ENCODE measurements at regions of chr3 and their contacts with region 1.

Region 1: GRCh38 chr3:52056968-52057805 is 816 bp upstream of the DUSP7 start:
- DNase-seq: peak; percentile 99
- H3K4me3 ChIP-seq: peak overlapping the region; percentile 47 to 55
- H3K27ac ChIP-seq: peak overlapping the region; percentile 85 to 88
- H3K4me1 ChIP-seq: peaks cover 7% of the 10 kb centered on the region
- H3K27me3 ChIP-seq: no peaks in the 10 kb centered on the region
- CTCF ChIP-seq: peak in 1 of 4 experiments; percentile 40
- POLR2A ChIP-seq: peak; percentile 88

Region 2: DNA sequence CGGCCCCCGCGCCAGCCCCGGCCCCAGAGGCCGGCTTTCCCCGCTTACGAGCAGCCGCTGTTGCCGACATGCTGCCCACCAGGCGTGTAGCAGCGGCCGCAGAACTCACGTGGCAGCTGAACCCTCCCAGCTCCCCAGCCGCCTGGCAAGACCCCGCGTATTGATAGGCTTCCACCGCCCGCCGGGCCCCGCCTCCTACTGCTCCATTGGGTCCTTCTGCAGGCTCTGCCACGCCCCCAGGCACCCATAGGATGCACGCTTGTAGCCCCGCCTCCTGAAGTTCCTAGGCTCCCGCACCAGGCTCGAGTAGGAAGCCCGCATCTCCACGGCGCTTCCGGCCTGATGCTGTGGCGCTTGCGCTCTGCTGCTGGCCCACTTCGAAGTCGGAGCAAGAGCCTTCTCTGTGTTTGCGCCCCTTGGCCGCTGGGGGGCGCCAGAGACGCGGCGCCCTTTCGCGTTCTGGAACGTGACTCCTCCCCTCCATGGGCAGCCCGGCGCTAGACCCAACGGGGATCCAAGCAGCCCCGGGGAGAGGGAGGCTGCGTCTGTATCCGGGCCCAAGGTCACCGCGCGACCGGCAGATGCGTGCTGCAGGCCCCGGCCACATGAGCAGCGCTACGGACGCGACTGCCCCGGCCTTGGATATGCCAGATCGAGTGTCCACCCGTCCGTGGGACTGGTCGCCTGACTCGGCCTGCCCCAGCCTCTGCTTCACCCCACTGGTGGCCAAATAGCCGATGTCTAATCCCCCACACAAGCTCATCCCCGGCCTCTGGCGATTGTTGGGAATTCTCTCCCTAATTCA is 115.2 kb before region 1 on chr3 and contains the starts of genes PARP3 and RRP9:
- intact Hi-C with region 1: loop called (anchors 5 kb)
- DNase-seq: peak; percentile 100
- H3K4me3 ChIP-seq: peak within 1 kb of the TSS; percentile 60 to 66
- H3K27ac ChIP-seq: peak within 1 kb of the TSS; percentile 80 to 87
- H3K4me1 ChIP-seq: peaks cover 9% of the 10 kb centered on the region
- H3K27me3 ChIP-seq: no peaks in the 10 kb centered on the region
- CTCF ChIP-seq: peak; percentile 98 to 100 (median 100)
- POLR2A ChIP-seq: peak; percentile 53
- total RNA-seq, gene PARP3: 22.0 to 45.9 TPM
- total RNA-seq, gene RRP9: 14.9 to 18.6 TPM

Region 3: DNA sequence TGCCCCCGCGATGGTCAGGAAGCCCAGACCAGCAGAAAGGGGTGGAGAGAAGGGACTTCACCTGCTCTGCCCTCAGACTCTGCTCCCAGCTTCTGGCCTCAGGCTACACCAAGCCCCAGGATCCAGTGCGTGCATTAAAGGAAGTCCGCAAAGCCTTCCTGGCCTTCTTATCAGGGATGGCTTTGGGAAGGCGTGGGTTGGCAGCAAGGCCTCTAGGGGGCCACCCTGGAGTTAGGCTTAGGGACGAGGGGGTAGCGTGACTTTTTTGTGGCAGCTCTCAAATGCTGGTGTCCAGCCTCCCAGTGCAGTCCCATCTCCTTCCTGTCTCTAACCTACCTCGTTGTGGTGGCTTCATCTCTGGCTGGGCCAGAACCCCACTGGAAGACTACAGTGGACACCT is 42.6 kb before region 1 on chr3:
- intact Hi-C with region 1: loop called (anchors 5 kb)
- DNase-seq: no peak
- H3K4me3 ChIP-seq: no peak overlapping the region
- H3K27ac ChIP-seq: no peak overlapping the region
- H3K4me1 ChIP-seq: no peaks in the 10 kb centered on the region
- H3K27me3 ChIP-seq: no peaks in the 10 kb centered on the region
- CTCF ChIP-seq: no peak
- POLR2A ChIP-seq: no peak

Region 4: GRCh38 chr3:52144034-52144795 is 87.0 kb after region 1 on chr3:
- intact Hi-C with region 1: loop called (anchors 10 kb)
- DNase-seq: peak; percentile 90
- H3K4me3 ChIP-seq: no peak overlapping the region
- H3K27ac ChIP-seq: no peak overlapping the region
- H3K4me1 ChIP-seq: no peaks in the 10 kb centered on the region
- H3K27me3 ChIP-seq: no peaks in the 10 kb centered on the region
- CTCF ChIP-seq: peak; percentile 93 to 99 (median 98)
- POLR2A ChIP-seq: no peak